ENCODE measurements at regions of chr5 and their contacts with region 1.

Region 1: GRCh38 chr5:36875790-36876388 is 680 bp upstream of the NIPBL start:
- DNase-seq: peak; percentile 83
- H3K4me3 Mint-ChIP-seq: peak overlapping the region; percentile 88
- H3K27ac Mint-ChIP-seq: peak overlapping the region; percentile 96
- H3K4me1 Mint-ChIP-seq: peaks cover 35% of the 10 kb centered on the region
- H3K27me3 Mint-ChIP-seq: no peaks in the 10 kb centered on the region

Region 2: DNA sequence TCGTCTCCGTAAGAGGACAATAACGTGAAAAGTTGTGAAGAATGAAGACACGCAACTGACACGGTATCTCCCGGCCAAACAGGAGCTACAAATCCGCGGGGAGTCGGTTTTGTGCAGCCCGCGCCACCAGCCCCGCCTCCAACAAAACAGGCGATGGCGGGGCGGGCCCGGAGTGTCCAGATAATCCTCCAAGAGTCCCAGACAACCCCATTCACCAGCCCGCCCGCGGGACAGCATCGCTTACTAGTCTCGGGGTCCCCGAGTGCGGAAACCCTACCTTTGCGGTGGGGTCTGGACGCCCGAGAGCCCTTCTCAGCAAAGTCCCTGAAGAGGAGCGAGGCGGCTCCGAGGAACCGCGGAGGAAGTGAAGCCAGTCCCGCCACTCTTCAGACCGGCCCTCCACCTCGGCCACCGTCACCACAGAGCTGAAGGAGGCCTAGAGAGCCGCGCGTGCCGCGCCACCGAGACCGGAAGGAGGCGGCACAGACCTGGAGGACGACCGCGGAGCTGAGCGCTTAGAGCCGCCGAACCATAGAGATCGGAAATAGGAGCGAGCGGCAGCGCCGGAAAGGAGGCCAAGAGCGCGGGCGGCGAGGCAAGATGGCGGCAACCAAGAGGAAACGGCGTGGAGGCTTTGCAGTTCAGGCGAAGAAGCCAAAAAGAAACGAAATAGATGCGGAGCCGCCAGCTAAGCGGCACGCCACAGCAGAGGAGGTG is 1960.6 kb before region 1 on chr5 and contains the starts of genes BRIX1 and RAD1:
- CTCF ChIA-PET with region 1: interaction called, 3 read pairs
- POLR2A ChIA-PET with region 1: no interaction called
- intact Hi-C with region 1: loop called (anchors 10 kb)
- DNase-seq: peak; percentile 97
- H3K4me3 Mint-ChIP-seq: no peak within 1 kb of the TSS
- H3K27ac Mint-ChIP-seq: no peak within 1 kb of the TSS
- H3K4me1 Mint-ChIP-seq: peaks cover 23% of the 10 kb centered on the region
- H3K27me3 Mint-ChIP-seq: no peaks in the 10 kb centered on the region
- total RNA-seq, gene BRIX1: 67.4 to 71.4 TPM
- total RNA-seq, gene RAD1: 36.2 to 38.3 TPM

Region 3: GRCh38 chr5:36241631-36242533 is 634.0 kb before region 1 on chr5 and contains the start of gene NADK2:
- CTCF ChIA-PET with region 1: interaction called, 3 read pairs
- POLR2A ChIA-PET with region 1: no interaction called
- intact Hi-C with region 1: loop called (anchors 5 kb)
- DNase-seq: peak; percentile 96
- H3K4me3 Mint-ChIP-seq: peak within 1 kb of the TSS; percentile 80
- H3K27ac Mint-ChIP-seq: peak within 1 kb of the TSS; percentile 86
- H3K4me1 Mint-ChIP-seq: peaks cover 44% of the 10 kb centered on the region
- H3K27me3 Mint-ChIP-seq: no peaks in the 10 kb centered on the region
- total RNA-seq, gene NADK2: 16.6 to 18.0 TPM

Region 4: DNA sequence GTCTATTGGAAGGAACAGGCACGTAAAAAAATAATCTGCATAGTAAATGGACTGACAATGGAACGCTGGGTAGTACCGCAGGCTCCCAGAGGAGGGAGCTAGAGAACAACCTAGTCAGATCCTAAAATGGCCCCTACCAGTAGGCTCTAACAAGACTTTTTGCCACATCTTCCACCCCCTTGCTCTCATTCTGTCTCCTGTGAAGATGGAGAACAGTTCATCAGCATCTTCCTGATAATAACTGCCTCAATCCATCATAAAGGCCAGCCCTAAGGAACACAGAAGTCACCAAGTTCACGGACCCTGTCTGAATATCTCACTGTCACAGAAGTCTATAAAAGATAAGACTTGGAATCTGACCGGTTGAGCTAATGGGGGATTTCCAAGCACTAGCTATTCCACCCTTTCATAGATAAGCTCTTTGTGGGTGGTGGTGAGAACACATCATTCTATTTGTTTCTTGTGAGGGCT is 136.1 kb before region 1 on chr5:
- CTCF ChIA-PET with region 1: interaction called, 23 read pairs
- POLR2A ChIA-PET with region 1: interaction called, 3 read pairs
- intact Hi-C with region 1: loop called (anchors 1 kb)
- DNase-seq: peak; percentile 84
- H3K4me3 Mint-ChIP-seq: no peak overlapping the region
- H3K27ac Mint-ChIP-seq: no peak overlapping the region
- H3K4me1 Mint-ChIP-seq: peaks cover 4% of the 10 kb centered on the region
- H3K27me3 Mint-ChIP-seq: peaks cover 25% of the 10 kb centered on the region

Region 5: DNA sequence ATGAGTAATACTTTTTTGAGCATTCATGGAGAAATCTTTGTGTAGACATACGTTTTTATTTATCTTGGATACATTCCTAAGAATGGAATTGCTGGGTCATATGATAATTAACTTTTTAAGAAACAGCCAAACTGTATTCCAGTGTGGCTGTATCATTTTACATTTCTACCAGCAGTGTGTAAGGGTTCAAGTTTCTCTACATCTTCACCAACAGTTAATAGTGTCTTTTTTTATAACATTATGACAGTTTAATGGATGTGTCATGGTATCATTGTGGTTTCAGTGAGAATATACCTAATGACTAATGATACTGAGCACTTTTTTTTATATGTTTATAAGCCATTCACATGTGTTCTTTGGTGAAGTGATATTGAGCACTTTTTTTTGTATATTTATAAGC is 53.1 kb after region 1 on chr5:
- CTCF ChIA-PET with region 1: no interaction called
- POLR2A ChIA-PET with region 1: no interaction called
- intact Hi-C with region 1: loop called (anchors 5 kb)
- DNase-seq: no peak
- H3K4me3 Mint-ChIP-seq: no peak overlapping the region
- H3K27ac Mint-ChIP-seq: no peak overlapping the region
- H3K4me1 Mint-ChIP-seq: peaks cover 62% of the 10 kb centered on the region
- H3K27me3 Mint-ChIP-seq: no peaks in the 10 kb centered on the region

Region 6: GRCh38 chr5:36998578-36998977 is 122.7 kb after region 1 on chr5:
- CTCF ChIA-PET with region 1: interaction called, 3 read pairs
- POLR2A ChIA-PET with region 1: no interaction called
- intact Hi-C with region 1: loop called (anchors 5 kb)
- DNase-seq: peak; percentile 11
- H3K4me3 Mint-ChIP-seq: no peak overlapping the region
- H3K27ac Mint-ChIP-seq: peak overlapping the region; percentile 0
- H3K4me1 Mint-ChIP-seq: peaks cover 14% of the 10 kb centered on the region
- H3K27me3 Mint-ChIP-seq: no peaks in the 10 kb centered on the region

Region 7: GRCh38 chr5:37370864-37371726 is 495.2 kb after region 1 on chr5 and contains the start of gene NUP155:
- CTCF ChIA-PET with region 1: no interaction called
- POLR2A ChIA-PET with region 1: no interaction called
- intact Hi-C with region 1: loop called (anchors 2 kb)
- DNase-seq: peak; percentile 94
- H3K4me3 Mint-ChIP-seq: peak within 1 kb of the TSS; percentile 94
- H3K27ac Mint-ChIP-seq: peak within 1 kb of the TSS; percentile 90
- H3K4me1 Mint-ChIP-seq: peaks cover 24% of the 10 kb centered on the region
- H3K27me3 Mint-ChIP-seq: no peaks in the 10 kb centered on the region
- total RNA-seq, gene NUP155: 74.6 to 75.6 TPM

Measured in activated CD4-positive, alpha-beta memory T cell treated with anti-CD3 and anti-CD28 coated beads for 36 hours (primary cell).